Posterior vena cava (tissue), 2 donors: ENCODE measurements at regions of chr4 and their contacts with region 1.

Region 1: GRCh38 chr4:38179690-38180377 is 219.6 kb downstream of the PTTG2 start:
- DNase-seq: peak; percentile 88

Region 2: DNA sequence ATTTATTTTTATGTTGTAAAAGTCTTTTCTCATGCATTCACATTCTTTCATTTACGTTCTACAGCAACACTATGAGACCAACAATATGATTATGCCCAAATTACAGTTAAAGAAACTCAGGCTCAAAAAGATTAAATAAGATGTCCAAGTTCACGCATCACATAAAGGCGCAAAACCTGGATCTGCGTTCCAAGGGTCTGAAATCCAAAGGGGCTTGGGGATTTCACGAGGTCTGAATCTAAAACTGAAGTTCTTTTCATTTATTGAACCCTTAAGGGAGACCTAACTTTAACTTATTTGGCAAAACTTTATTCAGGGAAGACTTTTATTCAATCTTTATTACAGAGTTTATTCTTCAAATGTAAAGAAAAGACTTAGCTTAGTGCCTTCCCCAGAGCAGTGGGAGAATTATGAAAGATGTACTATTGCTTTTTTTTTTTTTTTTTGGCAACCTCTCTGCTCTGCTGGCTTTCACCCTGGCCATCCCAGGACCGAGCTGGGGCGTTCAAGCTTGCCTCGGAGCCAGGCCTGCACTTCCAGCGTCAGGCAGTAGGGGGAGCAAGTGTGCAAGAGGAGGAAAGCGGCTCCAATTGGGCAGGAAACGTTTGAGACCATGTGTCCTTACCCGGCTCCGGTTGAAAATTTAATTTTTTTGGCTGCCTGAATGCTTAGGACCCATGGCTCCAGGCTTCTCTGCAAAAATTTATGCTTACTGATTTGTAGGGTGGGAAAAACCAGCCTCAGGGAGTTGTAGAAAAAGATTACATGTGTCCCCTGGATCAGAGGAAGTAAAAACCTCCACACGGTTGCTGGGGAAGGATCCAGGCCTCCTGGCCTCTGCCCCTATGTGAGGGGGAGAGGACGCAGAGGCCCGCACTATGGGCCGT is 139.9 kb after region 1 on chr4:
- intact Hi-C with region 1: loop called in 1 of 2 experiments (anchors 10 kb)
- DNase-seq: peak; percentile 98

Region 3: GRCh38 chr4:38675146-38676121 is 495.6 kb after region 1 on chr4:
- intact Hi-C with region 1: loop called (anchors 5 to 10 kb)
- DNase-seq: no peak

Region 4: GRCh38 chr4:38730830-38731646 is 551.2 kb after region 1 on chr4:
- intact Hi-C with region 1: loop called (anchors 2 to 5 kb)
- DNase-seq: peak; percentile 95

Region 5: DNA sequence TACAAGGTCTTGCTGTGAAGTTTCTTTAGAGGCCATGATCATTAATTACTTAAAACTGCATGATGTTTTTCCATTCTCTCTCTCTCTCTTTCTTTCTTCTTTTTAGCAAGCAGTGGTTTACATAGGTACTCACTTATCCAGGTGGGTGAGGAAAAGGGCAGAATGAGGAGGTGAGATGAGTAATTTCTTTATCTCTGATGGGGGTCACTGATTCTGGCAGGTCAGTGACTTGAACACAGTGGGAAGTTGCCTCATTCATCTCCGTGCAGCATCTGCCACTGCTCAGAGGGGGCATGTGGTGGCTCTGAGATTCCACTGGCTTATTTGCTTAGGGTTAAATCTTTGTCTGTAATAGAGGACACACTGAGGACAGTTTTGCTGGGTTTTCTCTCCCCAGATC is 750.4 kb after region 1 on chr4:
- intact Hi-C with region 1: loop called in 1 of 2 experiments (anchors 5 kb)
- DNase-seq: no peak